CD8-positive, alpha-beta T cell (primary cell): ENCODE measurements at regions of chr5 and their contacts with region 1.

Region 1: DNA sequence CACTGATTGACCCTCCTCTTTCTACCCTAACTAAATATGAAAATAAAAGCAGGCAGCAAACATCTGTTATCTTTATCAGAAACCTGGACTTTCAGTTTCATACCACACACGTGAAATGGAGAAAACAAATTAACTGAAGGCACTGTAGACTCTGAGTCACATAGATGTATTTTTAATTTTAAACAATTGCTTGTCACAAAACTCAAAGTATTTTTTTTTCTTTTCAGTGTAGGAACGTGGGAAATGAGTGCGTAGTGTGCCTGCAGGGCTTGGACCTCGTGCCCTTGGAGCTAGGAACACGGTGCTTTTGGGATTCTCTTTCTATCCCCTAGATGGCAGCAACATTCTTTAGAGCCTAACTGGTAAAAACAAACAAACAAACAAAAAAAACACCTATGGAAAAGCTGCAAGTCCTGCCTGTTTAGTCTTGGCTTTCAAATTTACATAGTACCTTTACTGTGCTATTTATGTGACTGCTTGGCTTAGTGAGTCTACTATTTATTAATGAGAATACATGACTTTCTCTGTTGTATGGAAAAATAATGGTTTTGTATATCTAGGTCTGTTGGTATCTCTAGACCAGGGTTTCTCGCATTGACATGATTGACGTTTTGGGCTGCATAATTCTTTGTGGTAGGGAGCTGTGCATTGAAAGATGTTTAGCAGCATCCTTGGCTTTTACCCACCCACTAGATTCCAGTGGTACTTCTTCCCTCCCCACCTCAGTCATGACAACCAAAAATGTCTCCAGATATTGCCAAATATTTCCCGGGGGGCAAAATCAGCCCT is 16.8 kb upstream of the ACTBL2 start:
- DNase-seq: peak in 2 of 9 experiments; percentile 4 to 17
- ATAC-seq: no peak
- H3K4me3 ChIP-seq: no peak overlapping the region
- H3K4me3 Mint-ChIP-seq: peak overlapping the region; percentile 37
- H3K27ac ChIP-seq: no peak overlapping the region
- H3K27ac Mint-ChIP-seq: no peak overlapping the region
- H3K4me1 ChIP-seq: peaks cover 12% of the 10 kb centered on the region
- H3K4me1 Mint-ChIP-seq: peaks cover 13% of the 10 kb centered on the region
- H3K27me3 ChIP-seq: no peaks in the 10 kb centered on the region
- H3K27me3 Mint-ChIP-seq: no peaks in the 10 kb centered on the region
- CTCF ChIP-seq: no peak

Region 2: GRCh38 chr5:57298295-57298984 is 201.0 kb before region 1 on chr5:
- CTCF ChIA-PET with region 1: no interaction called
- POLR2A ChIA-PET with region 1: no interaction called
- intact Hi-C with region 1: loop called in 1 of 2 experiments (anchors 10 kb)
- DNase-seq: peak; percentile 67 to 91 (median 84)
- ATAC-seq: peak; percentile 87
- H3K4me3 ChIP-seq: peak overlapping the region; percentile 7 to 39
- H3K4me3 Mint-ChIP-seq: peak overlapping the region; percentile 77
- H3K27ac ChIP-seq: no peak overlapping the region
- H3K27ac Mint-ChIP-seq: peak overlapping the region; percentile 62
- H3K4me1 ChIP-seq: peaks cover 6% of the 10 kb centered on the region
- H3K4me1 Mint-ChIP-seq: peaks cover 13% of the 10 kb centered on the region
- H3K27me3 ChIP-seq: no peaks in the 10 kb centered on the region
- H3K27me3 Mint-ChIP-seq: no peaks in the 10 kb centered on the region
- CTCF ChIP-seq: peak; percentile 64